Endothelial cell of umbilical vein (primary cell): ENCODE measurements at regions of chr5 and their contacts with region 1.

Region 1: DNA sequence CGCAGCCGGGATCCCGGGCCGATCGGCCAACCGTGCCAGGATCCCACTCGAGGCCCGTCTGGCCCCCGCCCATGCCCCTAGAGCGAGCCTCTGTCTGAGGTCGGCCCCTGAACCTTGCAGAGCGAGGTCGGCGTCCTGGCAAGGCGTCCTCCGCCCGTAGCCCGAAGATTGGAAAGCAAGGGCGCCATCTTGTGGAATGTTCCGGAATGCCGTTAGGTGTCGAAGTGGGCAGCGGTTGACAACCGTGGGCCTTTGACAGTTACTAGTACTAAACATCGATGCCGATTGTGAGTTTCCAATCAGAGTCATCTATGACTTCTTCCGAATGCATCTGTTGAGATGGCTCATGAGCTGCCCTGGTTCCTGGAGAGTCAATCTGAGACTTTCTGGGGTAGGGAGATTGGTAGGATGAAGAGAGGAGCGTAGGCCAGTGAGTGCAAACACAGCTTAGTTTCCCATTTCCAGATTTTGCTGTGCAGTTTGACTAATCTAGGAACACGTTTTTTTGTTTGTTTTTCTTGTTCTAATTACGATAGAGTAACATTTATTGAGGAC is 923 bp upstream of the PLK2 start:
- DNase-seq: peak; percentile 91
- H3K4me3 ChIP-seq: peak overlapping the region; percentile 34 to 94 (median 92)
- H3K27ac ChIP-seq: peak overlapping the region; percentile 87
- H3K4me1 ChIP-seq: peaks cover 25% of the 10 kb centered on the region
- H3K27me3 ChIP-seq: no peaks in the 10 kb centered on the region
- CTCF ChIP-seq: peak; percentile 72 to 82
- POLR2A ChIP-seq: no peak

Region 2: DNA sequence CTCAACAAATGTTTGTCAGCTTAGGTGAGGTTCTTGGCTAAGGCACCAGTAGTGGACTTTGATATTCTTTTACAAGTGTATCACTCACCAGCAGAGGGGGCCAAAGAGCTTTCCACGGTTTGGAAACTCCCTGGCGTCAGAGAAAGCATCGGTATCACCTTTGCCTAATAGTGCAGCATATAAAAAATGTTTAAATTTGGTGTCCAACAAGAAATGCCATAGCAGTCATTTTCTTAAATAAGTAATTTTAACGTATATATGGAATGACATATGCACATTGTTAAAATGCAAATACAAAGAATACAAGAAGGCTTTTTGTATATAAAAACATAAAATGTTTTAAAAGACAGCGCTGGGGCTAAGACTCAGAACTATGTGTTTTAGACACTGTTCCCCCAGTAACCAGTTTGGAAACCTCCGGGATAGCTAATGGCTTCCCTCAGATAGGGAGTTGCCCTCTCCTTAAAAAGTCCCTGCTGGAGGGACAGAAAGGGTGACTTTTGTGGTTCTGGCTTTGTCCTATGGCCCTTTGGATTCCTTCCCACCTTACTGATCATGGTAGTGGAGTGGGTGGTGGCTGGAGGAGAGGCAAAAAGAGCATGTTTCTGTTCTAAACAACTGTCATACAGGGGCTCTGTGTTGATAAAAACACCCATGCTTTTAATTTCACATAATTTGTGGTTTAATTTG is 1162.4 kb before region 1 on chr5:
- CTCF ChIA-PET with region 1: interaction called, 93 read pairs
- POLR2A ChIA-PET with region 1: interaction called, 17 read pairs
- dilution Hi-C with region 1: no loop called
- intact Hi-C with region 1: loop called (anchors 1 kb)
- DNase-seq: peak; percentile 86
- H3K4me3 ChIP-seq: no peak overlapping the region
- H3K27ac ChIP-seq: peak overlapping the region; percentile 47
- H3K4me1 ChIP-seq: peaks cover 10% of the 10 kb centered on the region
- H3K27me3 ChIP-seq: no peaks in the 10 kb centered on the region
- CTCF ChIP-seq: peak; percentile 72 to 73
- POLR2A ChIP-seq: no peak

Region 3: GRCh38 chr5:57494104-57495098 is 966.4 kb before region 1 on chr5:
- CTCF ChIA-PET with region 1: interaction called, 96 read pairs
- POLR2A ChIA-PET with region 1: interaction called, 13 read pairs
- dilution Hi-C with region 1: loop called (anchors 25 kb)
- intact Hi-C with region 1: loop called (anchors 1 kb)
- DNase-seq: peak; percentile 93
- H3K4me3 ChIP-seq: no peak overlapping the region
- H3K27ac ChIP-seq: peak overlapping the region; percentile 92
- H3K4me1 ChIP-seq: peaks cover 48% of the 10 kb centered on the region
- H3K27me3 ChIP-seq: no peaks in the 10 kb centered on the region
- CTCF ChIP-seq: no peak
- POLR2A ChIP-seq: no peak

Region 4: DNA sequence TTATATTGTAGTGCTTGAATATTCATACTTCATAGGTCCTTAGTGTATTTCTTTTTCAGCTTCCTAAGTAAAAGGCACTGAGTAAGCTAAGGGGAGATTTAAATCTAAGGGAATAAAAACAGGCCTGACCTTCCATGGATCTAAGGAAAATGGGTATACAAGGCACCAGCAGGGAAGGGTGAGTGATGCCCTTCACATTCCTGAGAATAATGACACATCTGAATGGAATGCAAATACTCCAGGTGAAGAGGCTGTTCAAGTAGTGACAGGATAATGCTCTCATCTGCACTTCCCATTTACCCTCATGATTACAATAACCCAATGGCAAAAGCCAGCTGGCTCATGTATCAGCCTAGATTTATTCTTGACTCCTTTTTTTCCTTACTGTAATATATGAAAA is 762.0 kb before region 1 on chr5:
- CTCF ChIA-PET with region 1: interaction called, 4 read pairs
- POLR2A ChIA-PET with region 1: no interaction called
- dilution Hi-C with region 1: no loop called
- intact Hi-C with region 1: loop called (anchors 2 kb)
- DNase-seq: peak; percentile 75
- H3K4me3 ChIP-seq: no peak overlapping the region
- H3K27ac ChIP-seq: peak overlapping the region; percentile 60
- H3K4me1 ChIP-seq: peaks cover 29% of the 10 kb centered on the region
- H3K27me3 ChIP-seq: no peaks in the 10 kb centered on the region
- CTCF ChIP-seq: no peak
- POLR2A ChIP-seq: peak; percentile 15

Region 5: GRCh38 chr5:57911438-57911837 is 549.4 kb before region 1 on chr5:
- CTCF ChIA-PET with region 1: no interaction called
- POLR2A ChIA-PET with region 1: interaction called, 4 read pairs
- dilution Hi-C with region 1: no loop called
- intact Hi-C with region 1: loop called (anchors 1 kb)
- DNase-seq: peak; percentile 66
- H3K4me3 ChIP-seq: no peak overlapping the region
- H3K27ac ChIP-seq: no peak overlapping the region
- H3K4me1 ChIP-seq: peaks cover 8% of the 10 kb centered on the region
- H3K27me3 ChIP-seq: peaks cover 4 to 8% of the 10 kb centered on the region in 2 experiments
- CTCF ChIP-seq: no peak
- POLR2A ChIP-seq: no peak

Region 6: GRCh38 chr5:58240286-58240685 is 220.5 kb before region 1 on chr5:
- CTCF ChIA-PET with region 1: interaction called, 8 read pairs
- POLR2A ChIA-PET with region 1: interaction called, 12 read pairs
- dilution Hi-C with region 1: no loop called
- intact Hi-C with region 1: loop called (anchors 1 kb)
- DNase-seq: peak; percentile 89
- H3K4me3 ChIP-seq: no peak overlapping the region
- H3K27ac ChIP-seq: peak overlapping the region; percentile 89
- H3K4me1 ChIP-seq: peaks cover 54% of the 10 kb centered on the region
- H3K27me3 ChIP-seq: no peaks in the 10 kb centered on the region
- CTCF ChIP-seq: no peak
- POLR2A ChIP-seq: no peak

Region 7: DNA sequence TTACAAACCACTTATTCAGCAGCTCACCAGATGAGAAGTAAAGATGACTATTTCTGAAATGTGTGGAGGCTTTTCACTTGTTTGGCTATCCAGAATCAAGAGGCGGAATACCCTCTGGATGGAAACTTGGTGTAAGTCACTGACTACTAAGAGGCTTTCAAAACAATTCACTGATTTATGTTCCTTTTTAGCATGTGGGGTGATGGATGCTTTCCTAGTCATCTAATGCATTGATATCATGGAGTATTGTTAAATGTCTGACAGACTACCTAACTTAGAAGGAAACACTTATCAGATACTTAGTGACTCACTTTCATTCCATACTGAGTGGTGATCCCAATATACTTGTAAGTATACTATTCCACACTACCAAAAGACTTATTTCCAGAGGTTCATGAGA is 142.3 kb before region 1 on chr5:
- CTCF ChIA-PET with region 1: interaction called, 3 read pairs
- POLR2A ChIA-PET with region 1: no interaction called
- dilution Hi-C with region 1: no loop called
- intact Hi-C with region 1: loop called (anchors 5 kb)
- DNase-seq: peak; percentile 85
- H3K4me3 ChIP-seq: no peak overlapping the region
- H3K27ac ChIP-seq: no peak overlapping the region
- H3K4me1 ChIP-seq: peaks cover 31% of the 10 kb centered on the region
- H3K27me3 ChIP-seq: no peaks in the 10 kb centered on the region
- CTCF ChIP-seq: no peak
- POLR2A ChIP-seq: no peak